ENCODE measurements at regions of chr1 and their contacts with region 1.

Region 1: DNA sequence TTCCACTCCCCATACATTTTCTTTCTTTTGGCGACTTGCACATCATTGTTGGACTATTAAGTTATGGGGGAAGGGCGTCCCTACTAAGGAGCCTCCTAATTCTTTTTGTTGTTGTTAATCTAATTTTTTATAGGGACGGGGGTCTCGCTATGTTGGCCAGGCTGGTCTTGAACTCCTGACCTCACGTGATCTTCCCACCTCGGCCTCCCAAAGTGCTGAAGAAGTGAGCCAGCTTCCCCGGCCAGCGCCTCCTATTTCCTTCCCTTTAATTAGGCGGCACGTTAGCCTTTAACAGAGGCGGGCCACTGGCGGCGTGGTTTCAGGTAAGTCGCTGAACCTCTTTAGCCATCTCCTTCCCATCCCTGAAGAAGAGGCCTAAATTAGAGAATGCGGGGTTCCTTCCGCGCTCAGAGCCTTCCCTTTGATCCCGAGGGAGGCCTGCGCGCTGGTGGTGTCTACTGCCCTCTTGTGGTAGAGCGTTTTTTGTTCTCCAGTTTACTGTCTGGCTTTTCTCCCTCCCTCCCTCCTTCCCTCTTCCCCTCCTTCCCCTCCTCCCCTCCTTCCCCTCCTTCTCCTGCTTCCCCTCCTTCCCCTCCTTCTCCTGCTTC is 38.1 kb downstream of the TNFRSF9 start:
- DNase-seq: peak; percentile 55 to 82 (median 72)
- H3K4me3 ChIP-seq: no peak overlapping the region
- H3K27ac ChIP-seq: no peak overlapping the region
- H3K4me1 ChIP-seq: no peaks in the 10 kb centered on the region
- H3K27me3 ChIP-seq: no peaks in the 10 kb centered on the region
- CTCF ChIP-seq: peak; percentile 61 to 75 (median 70)
- POLR2A ChIP-seq: no peak

Region 2: DNA sequence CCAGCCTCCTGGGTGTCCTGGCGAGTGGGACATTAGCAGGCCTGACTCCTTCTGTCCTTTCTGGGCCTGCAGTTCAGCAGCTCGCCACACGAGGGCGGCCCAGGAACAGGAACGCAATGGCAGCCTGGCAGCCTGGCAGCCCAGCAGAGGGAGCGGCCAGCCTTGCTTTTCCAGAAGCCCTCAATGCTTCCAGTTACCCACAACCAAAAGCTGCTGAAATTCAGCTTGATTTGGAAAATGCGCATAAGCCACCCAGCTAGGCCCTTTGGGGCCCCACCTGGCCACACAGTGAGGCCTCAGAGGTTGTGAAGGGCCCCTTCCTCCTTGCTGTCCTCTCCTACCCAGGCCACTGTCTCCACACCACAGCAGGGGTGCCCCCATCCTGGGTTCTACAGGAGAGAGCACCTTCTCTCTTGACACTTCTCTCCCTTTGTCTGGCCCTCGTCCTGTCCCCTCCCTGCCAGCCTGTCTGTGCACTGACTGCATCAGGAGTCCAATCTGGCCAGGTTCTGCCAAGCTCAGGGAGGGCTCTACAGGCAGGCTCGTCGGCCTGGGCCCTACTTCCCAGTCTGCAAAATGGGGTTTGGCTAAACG is 234.9 kb before region 1 on chr1:
- intact Hi-C with region 1: loop called (anchors 5 kb)
- DNase-seq: peak; percentile 82 to 97 (median 93)
- H3K4me3 ChIP-seq: no peak overlapping the region
- H3K27ac ChIP-seq: peak overlapping the region in 1 of 5 donors; percentile 81
- H3K4me1 ChIP-seq: no peaks in the 10 kb centered on the region
- H3K27me3 ChIP-seq: no peaks in the 10 kb centered on the region
- CTCF ChIP-seq: peak; percentile 99 to 100 (median 100)
- POLR2A ChIP-seq: peak in 1 of 2 donors; percentile 13

Region 3: GRCh38 chr1:7810395-7810794 is 92.2 kb before region 1 on chr1:
- intact Hi-C with region 1: loop called in 1 of 2 experiments (anchors 10 kb)
- DNase-seq: peak; percentile 82 to 92 (median 87)
- H3K4me3 ChIP-seq: no peak overlapping the region
- H3K27ac ChIP-seq: peak overlapping the region in 2 of 5 donors; percentile 26 to 38
- H3K4me1 ChIP-seq: no peaks in the 10 kb centered on the region
- H3K27me3 ChIP-seq: no peaks in the 10 kb centered on the region
- CTCF ChIP-seq: no peak
- POLR2A ChIP-seq: no peak

Region 4: GRCh38 chr1:8040586-8040985 is 138.0 kb after region 1 on chr1:
- intact Hi-C with region 1: no loop called
- DNase-seq: peak; percentile 85 to 95 (median 94)
- H3K4me3 ChIP-seq: no peak overlapping the region
- H3K27ac ChIP-seq: peak overlapping the region; percentile 5 to 68 (median 35)
- H3K4me1 ChIP-seq: peaks cover 0 to 4% of the 10 kb centered on the region in 2 donors
- H3K27me3 ChIP-seq: no peaks in the 10 kb centered on the region
- CTCF ChIP-seq: no peak
- POLR2A ChIP-seq: no peak

Region 5: DNA sequence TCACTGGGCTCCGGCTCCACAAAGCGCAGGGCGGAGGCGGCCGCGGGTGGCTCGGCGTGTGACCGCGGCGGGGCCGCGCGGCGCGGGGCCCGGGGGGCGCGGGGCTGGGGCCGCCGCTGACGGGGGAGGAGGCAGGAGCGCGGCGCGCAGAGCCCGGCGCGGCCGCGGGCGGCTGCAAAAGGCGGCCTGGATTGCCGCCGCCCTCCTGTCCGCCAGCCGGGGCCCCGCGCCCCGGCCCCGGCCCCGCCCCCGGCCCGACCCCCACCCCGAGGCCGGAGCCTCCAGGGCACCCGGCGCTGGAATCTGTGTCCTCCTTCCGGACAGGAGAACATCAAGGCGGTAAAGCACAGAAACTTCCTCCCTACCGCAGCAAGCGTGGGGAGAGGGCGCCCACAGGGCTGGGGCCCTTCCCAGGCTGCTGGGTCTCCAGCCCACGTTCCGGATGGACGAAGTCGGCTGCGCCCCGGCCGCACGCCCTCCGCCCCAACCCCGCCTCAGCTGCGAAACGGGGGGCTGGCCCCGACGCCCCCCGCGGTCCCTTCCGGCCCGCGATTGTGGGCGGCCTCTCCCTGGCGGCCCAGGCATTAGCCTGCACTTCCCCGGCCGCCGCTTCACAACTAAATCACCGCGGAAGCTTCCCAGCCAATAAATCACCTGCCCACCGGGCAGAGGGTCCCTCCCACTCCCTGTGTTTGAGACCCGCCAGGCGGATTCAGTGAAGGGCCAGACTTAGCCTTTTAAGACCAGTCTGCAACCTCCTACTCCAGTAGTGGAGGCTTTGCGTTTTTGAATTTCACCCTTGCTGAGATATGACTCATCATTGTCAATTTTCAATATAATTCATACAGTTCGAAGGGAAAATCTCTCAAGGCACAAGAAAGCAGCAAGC is 521.3 kb after region 1 on chr1:
- intact Hi-C with region 1: no loop called
- DNase-seq: peak; percentile 54 to 75 (median 59)
- H3K4me3 ChIP-seq: peak overlapping the region; percentile 53 to 95 (median 72)
- H3K27ac ChIP-seq: peak overlapping the region; percentile 93 to 98 (median 97)
- H3K4me1 ChIP-seq: peaks cover 28 to 59% of the 10 kb centered on the region in 2 donors
- H3K27me3 ChIP-seq: no peaks in the 10 kb centered on the region
- CTCF ChIP-seq: peak in 3 of 6 experiments; percentile 16 to 36 (median 34)
- POLR2A ChIP-seq: peak; percentile 14 to 75

Measured in adrenal gland (tissue), 19 donors.